Upper lobe of right lung (tissue), 1 donor: ENCODE measurements at regions of chr11 and their contacts with region 1.

Region 1: GRCh38 chr11:130213143-130213978 is 53.8 kb downstream of the ST14 start:
- DNase-seq: peak; percentile 85
- ATAC-seq: peak; percentile 91
- H3K4me3 ChIP-seq: no peak overlapping the region
- H3K27ac ChIP-seq: no peak overlapping the region
- H3K4me1 ChIP-seq: peaks cover 8% of the 10 kb centered on the region
- H3K27me3 ChIP-seq: no peaks in the 10 kb centered on the region
- CTCF ChIP-seq: peak; percentile 93

Region 2: DNA sequence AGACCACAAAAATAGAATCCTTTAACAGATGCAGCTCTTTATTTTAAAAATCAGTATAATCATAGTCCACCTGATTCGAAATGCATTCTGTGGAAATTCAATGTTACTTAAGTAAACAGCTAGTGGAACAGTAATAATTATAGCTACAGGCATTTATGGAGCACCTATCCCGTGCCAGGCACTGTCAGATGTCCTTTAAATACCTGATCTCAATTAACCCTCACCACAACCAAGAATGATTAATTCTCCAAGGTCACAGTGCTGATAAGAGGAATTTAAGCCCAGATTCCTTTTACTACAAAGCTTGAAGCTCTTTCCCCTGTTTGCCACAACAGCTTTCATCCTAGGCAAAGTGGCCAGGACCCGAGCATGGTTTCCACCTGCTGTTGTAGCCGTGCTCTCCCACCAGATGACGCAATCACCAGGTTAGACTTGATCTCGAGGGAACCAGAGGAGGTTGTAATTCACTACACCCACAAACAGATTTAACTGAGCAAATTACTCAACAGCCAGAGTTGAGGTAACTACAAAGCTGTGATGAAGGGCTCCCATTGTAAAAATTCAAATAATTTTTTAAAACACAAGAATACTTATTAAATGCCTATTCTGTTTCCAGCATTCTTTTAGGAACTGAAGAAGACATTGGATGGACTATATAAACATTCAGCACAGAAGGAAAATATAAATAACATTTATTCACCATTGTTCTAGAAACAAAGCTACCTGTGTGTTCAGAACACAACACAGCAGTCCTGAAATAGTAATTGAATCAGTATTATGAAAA is 221.0 kb before region 1 on chr11:
- intact Hi-C with region 1: no loop called
- DNase-seq: no peak
- ATAC-seq: peak; percentile 92
- H3K4me3 ChIP-seq: no peak overlapping the region
- H3K27ac ChIP-seq: no peak overlapping the region
- H3K4me1 ChIP-seq: no peaks in the 10 kb centered on the region
- H3K27me3 ChIP-seq: no peaks in the 10 kb centered on the region
- CTCF ChIP-seq: peak; percentile 37

Region 3: DNA sequence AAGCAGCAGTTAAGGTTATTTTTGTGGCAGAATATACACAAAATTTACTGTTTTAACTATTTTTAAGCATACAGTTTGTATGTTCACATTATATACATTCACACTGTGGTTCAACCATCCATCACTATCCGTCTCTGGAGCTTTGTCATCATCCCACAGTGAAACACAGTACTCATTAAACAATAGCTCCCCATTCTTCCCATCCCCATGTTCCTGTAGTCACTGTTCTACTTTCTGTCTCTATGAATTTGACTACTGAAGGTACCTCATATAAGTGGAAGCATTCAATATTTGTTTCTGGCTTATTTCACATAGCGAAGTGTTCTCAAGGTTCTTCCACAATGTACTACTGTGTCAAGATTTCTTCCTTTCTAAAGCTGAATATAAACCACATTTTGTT is 68.8 kb after region 1 on chr11:
- intact Hi-C with region 1: no loop called
- DNase-seq: no peak
- ATAC-seq: no peak
- H3K4me3 ChIP-seq: no peak overlapping the region
- H3K27ac ChIP-seq: no peak overlapping the region
- H3K4me1 ChIP-seq: peaks cover 6% of the 10 kb centered on the region
- H3K27me3 ChIP-seq: no peaks in the 10 kb centered on the region
- CTCF ChIP-seq: no peak

Region 4: GRCh38 chr11:130427581-130428315 is 214.4 kb after region 1 on chr11:
- intact Hi-C with region 1: loop called (anchors 10 kb)
- DNase-seq: no peak
- ATAC-seq: peak; percentile 3
- H3K4me3 ChIP-seq: peak overlapping the region; percentile 49
- H3K27ac ChIP-seq: peak overlapping the region; percentile 66
- H3K4me1 ChIP-seq: peaks cover 5% of the 10 kb centered on the region
- H3K27me3 ChIP-seq: peaks cover 29% of the 10 kb centered on the region
- CTCF ChIP-seq: peak; percentile 4